Adrenal gland (tissue), 19 donors: ENCODE measurements at regions of chr7 and their contacts with region 1.

Region 1: DNA sequence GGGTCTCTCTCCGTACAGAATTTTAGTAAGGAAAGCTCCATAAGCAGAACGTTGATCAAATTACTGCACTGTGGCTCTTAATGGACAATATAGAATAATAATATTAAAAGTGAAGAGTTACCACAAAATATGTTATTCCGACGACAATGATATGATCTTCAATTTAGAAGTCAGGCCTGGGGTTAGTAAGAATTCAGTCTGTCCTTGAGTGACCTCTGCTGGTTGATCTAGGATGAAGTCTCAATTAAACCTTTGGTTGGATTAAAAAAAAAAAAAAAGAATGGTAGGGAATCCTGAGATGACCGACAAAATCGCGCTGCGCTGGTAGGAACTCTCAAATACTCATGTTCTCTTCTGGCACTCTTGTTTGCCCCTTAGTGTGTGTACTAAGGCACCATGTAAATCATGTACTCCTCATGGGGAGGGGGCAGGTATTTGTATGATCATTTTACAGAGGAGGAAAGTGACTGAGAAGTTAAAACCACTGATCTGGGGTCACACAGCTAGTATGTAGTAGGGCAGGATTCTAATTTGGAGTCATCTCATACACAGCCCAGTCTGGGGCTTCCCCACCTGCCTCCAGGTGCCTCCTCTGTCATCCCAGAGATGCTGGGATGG is 161.3 kb upstream of the NPVF start:
- DNase-seq: peak in 5 of 7 donors; percentile 39 to 54 (median 46)
- H3K4me3 ChIP-seq: no peak overlapping the region
- H3K27ac ChIP-seq: no peak overlapping the region
- H3K4me1 ChIP-seq: peaks cover 25 to 32% of the 10 kb centered on the region in 2 donors
- H3K27me3 ChIP-seq: no peaks in the 10 kb centered on the region
- CTCF ChIP-seq: peak; percentile 56 to 91 (median 74)
- POLR2A ChIP-seq: no peak

Region 2: DNA sequence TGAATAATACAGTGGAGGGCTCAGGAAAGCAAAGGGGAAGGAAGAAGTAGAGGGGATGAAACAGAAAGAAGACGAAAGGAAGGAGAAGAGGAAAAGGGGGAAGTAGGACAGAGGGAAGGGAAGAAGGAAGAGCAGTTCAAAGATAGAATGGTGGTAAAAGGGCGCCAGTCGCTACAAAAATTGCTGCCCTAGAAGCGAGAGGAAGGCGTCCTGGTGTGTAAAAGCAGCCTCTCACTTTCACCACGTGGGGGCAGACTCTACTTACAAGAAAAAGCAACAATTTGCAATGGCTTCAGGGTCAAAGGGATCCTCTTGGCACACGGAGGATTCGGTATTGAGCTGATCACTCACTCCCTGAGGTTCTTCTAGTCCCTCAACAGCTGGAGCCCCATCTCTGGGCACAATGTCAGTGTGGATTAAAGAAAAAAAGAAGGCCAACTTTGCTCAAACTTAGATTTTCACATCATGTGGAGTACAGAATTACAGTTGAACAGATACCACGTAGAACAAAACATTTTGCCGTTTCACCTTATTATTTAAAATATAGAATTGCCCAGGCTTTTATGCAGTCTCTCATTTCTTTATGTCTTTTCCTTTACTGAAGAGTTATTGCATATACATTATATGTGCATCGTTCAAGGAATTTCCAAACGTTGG is 129.9 kb before region 1 on chr7:
- intact Hi-C with region 1: loop called (anchors 2 to 5 kb)
- DNase-seq: peak; percentile 68 to 92 (median 82)
- H3K4me3 ChIP-seq: no peak overlapping the region
- H3K27ac ChIP-seq: no peak overlapping the region
- H3K4me1 ChIP-seq: peaks cover 0 to 7% of the 10 kb centered on the region in 2 donors
- H3K27me3 ChIP-seq: no peaks in the 10 kb centered on the region
- CTCF ChIP-seq: peak; percentile 64 to 96 (median 90)
- POLR2A ChIP-seq: no peak

Region 3: DNA sequence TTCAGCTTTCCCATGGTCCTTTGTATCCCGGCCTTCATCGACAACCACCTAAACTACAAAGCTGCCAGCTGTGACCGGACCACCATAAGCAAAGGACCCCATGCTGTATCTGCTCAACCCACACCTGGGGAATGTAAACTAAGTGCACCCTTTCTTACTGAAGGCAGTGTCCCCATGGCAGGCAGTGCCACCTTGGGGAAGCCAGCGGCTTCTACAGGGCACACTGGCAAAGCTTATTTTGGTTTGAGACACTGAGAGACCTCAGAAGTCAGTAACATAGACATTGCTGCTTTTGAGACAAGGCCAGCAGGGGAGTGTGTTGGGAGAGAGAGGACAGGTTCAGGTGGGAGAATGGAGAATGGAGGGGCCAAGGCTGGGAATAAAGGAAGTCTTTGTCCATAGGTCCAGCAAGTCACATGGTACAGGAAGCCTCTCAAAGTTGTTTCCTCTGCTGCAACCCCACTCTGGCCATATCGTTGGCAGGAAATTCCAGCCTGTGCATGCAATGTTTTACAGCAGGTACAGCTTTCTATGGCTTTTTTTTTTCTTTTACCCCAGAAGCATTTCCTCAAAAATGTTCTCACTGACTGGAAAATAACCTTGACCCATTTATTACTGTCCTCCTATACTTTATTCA is 75.4 kb before region 1 on chr7:
- intact Hi-C with region 1: loop called in 1 of 2 experiments (anchors 10 kb)
- DNase-seq: no peak
- H3K4me3 ChIP-seq: no peak overlapping the region
- H3K27ac ChIP-seq: peak overlapping the region in 2 of 5 donors; percentile 6 to 48
- H3K4me1 ChIP-seq: peaks cover 27 to 29% of the 10 kb centered on the region in 2 donors
- H3K27me3 ChIP-seq: no peaks in the 10 kb centered on the region
- CTCF ChIP-seq: no peak
- POLR2A ChIP-seq: no peak

Region 4: GRCh38 chr7:25444991-25445390 is 55.4 kb after region 1 on chr7:
- intact Hi-C with region 1: loop called in 1 of 2 experiments (anchors 10 kb)
- DNase-seq: no peak
- H3K4me3 ChIP-seq: no peak overlapping the region
- H3K27ac ChIP-seq: no peak overlapping the region
- H3K4me1 ChIP-seq: no peaks in the 10 kb centered on the region
- H3K27me3 ChIP-seq: no peaks in the 10 kb centered on the region
- CTCF ChIP-seq: no peak
- POLR2A ChIP-seq: no peak

Region 5: DNA sequence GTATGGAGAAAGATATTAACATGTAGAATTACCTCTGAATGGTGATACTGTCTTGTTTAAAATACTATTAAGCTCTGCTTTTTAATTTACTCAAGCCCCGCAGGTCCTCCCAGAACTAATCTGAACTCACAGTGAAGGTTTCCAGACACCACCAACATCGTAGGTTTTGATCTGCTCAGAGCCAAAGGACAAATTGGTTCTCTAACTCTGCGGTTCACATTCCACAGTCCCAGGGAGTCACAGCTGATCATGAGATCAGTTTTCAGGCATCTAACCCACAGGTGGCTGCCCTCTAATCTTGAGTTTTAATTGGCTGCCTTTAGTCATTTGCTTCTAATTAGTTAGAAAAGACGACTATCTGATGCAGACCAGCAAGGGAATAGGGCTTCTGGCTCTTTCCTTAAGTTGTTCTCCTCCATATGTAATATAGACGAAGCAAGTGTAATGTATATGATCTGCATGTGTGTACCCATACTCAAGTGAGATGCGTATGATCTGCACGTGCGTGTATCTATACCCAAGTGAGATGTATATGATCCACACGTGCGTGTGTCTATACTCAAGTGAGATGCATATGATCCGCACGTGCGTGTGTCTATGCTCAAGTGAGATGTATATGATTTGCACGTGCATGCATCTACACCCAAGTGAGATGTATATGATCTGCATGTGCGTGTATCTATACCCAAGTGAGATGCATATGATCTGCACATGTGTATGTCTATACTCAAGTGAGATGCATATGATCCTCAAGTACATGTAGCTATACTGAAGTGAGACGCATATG is 170.2 kb after region 1 on chr7:
- intact Hi-C with region 1: loop called (anchors 2 to 5 kb)
- DNase-seq: no peak
- H3K4me3 ChIP-seq: no peak overlapping the region
- H3K27ac ChIP-seq: no peak overlapping the region
- H3K4me1 ChIP-seq: peaks cover 5 to 14% of the 10 kb centered on the region in 2 donors
- H3K27me3 ChIP-seq: no peaks in the 10 kb centered on the region
- CTCF ChIP-seq: no peak
- POLR2A ChIP-seq: no peak

Region 6: DNA sequence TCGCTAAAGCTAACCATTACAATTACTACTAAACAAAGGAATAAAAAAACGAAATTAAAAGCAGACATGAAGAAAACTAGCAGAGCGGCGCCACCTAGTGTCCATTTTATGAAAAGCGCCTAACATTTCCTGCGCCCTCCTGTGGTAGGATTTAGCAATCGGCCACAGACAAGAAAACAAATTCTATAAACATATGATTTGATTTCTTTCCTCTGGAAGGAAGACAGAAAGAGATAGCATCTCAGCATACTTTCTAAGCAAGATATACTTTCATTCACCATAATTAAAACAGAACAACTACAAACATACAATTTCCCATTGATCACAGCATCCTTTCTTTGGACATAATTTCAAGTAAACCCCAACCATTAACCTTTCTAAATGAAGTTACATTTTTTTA is 176.4 kb after region 1 on chr7:
- intact Hi-C with region 1: loop called (anchors 2 to 5 kb)
- DNase-seq: peak; percentile 34 to 93 (median 69)
- H3K4me3 ChIP-seq: peak overlapping the region in 1 of 4 donors; percentile 30
- H3K27ac ChIP-seq: no peak overlapping the region
- H3K4me1 ChIP-seq: peaks cover 5 to 12% of the 10 kb centered on the region in 2 donors
- H3K27me3 ChIP-seq: no peaks in the 10 kb centered on the region
- CTCF ChIP-seq: peak; percentile 100
- POLR2A ChIP-seq: no peak

Region 7: DNA sequence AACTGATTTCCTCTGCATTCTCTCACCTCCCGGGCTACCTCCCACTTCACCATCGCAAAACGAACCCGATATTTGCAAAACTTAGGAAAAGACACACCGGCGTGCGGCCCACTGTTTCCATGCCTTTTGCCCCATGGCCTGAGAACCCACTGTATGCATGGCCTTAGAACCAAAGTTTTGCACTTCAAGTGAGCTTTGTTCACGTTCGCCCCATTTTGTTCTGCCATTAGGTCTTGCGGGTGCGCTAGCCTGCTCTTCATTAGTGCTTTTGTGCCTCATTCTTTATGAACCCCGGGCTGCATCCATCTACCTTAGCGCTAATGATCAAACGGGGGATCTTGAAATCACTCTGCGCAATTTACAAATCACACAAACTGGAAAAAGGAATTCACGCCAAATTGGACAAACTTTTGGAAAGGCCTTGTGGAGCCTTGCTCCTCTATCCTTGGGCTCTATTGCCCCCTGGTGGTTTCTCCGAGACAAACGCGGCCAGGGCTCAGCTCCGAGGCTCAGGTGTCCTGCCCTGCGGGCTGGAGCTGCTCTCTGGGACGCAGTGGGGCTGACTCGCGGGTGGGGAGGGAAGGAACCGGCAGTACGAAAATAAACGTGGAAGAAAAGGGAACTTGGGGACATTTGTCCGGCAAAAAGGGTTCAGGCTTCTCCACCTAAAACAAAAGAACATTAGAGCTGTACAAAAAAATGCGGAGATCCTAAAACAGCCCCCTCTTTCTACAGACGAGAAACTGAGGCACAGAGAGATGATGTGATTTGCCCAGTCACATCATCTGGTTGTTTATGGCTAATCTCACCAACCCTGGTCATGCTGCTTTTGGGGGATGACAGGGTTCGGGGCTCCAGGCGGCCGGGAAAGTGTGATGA is 462.0 kb after region 1 on chr7:
- intact Hi-C with region 1: loop called in 1 of 2 experiments (anchors 5 kb)
- DNase-seq: peak; percentile 77 to 94 (median 83)
- H3K4me3 ChIP-seq: peak overlapping the region in 1 of 4 donors; percentile 42
- H3K27ac ChIP-seq: peak overlapping the region in 3 of 5 donors; percentile 41 to 74 (median 48)
- H3K4me1 ChIP-seq: peaks cover 10 to 45% of the 10 kb centered on the region in 2 donors
- H3K27me3 ChIP-seq: peaks cover 43% of the 10 kb centered on the region
- CTCF ChIP-seq: peak; percentile 74 to 94 (median 88)
- POLR2A ChIP-seq: no peak